ENCODE measurements at regions of chr6 and their contacts with region 1.

Region 1: DNA sequence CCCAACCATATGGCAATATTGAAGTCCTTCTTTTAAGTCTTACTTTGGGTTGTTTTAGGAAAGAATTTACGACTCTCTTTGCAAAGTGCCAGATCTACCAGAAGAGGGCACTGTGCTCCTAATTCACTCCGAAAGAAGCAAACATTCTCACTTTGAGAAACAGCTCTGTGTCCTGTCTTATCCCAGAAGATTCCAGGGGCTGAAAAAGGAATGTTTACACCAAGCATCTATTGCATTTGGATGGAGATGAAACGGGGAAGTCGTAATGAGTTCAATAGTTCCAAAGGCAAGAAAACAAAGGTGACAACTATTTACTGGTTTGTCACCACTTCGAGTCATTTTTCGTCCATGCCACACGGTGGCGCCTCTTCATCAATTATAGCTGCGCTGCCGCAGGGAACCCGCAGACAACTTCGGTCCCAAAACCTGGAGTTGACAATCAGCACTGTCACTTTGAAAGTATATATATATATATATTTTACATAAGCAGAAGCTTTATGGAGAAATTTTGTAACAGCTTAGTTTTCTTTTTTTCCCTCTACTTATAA is 121.6 kb downstream of the MOXD1 start:
- DNase-seq: peak; percentile 54
- H3K4me3 ChIP-seq: peak overlapping the region; percentile 55
- H3K27ac ChIP-seq: no peak overlapping the region
- H3K27me3 ChIP-seq: no peaks in the 10 kb centered on the region
- CTCF ChIP-seq: peak; percentile 76

Region 2: GRCh38 chr6:131923356-131923755 is 356.3 kb before region 1 on chr6:
- CTCF ChIA-PET with region 1: interaction called, 147 read pairs
- POLR2A ChIA-PET with region 1: no interaction called
- DNase-seq: no peak
- H3K4me3 ChIP-seq: no peak overlapping the region
- H3K27ac ChIP-seq: no peak overlapping the region
- H3K27me3 ChIP-seq: no peaks in the 10 kb centered on the region
- CTCF ChIP-seq: peak; percentile 53

Region 3: DNA sequence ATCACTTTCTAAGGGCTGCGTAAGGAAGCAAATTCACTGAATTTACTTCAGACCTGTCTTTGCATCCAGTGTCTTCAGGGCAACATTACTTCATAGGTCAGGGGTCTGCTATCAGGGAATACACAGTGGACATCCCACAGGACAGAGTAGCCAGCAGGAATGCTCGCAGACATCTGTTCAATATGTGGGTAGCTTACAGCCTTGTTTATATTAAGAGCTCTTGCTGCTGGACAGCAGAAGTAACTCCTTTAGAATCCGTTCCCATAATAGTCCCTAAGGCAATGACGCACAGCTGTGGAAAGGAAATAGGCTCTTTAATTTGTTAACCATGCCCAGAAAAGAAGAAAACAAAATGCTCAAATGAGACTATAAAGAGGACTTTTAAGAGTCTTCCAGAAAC is 77.1 kb before region 1 on chr6:
- CTCF ChIA-PET with region 1: interaction called, 12 read pairs
- POLR2A ChIA-PET with region 1: no interaction called
- DNase-seq: peak; percentile 81
- H3K4me3 ChIP-seq: no peak overlapping the region
- H3K27ac ChIP-seq: no peak overlapping the region
- H3K27me3 ChIP-seq: no peaks in the 10 kb centered on the region
- CTCF ChIP-seq: no peak

Region 4: GRCh38 chr6:132259070-132259469 is 20.6 kb before region 1 on chr6:
- CTCF ChIA-PET with region 1: interaction called, 79 read pairs
- POLR2A ChIA-PET with region 1: no interaction called
- DNase-seq: no peak
- H3K4me3 ChIP-seq: no peak overlapping the region
- H3K27ac ChIP-seq: no peak overlapping the region
- H3K27me3 ChIP-seq: no peaks in the 10 kb centered on the region
- CTCF ChIP-seq: peak; percentile 52

Region 5: DNA sequence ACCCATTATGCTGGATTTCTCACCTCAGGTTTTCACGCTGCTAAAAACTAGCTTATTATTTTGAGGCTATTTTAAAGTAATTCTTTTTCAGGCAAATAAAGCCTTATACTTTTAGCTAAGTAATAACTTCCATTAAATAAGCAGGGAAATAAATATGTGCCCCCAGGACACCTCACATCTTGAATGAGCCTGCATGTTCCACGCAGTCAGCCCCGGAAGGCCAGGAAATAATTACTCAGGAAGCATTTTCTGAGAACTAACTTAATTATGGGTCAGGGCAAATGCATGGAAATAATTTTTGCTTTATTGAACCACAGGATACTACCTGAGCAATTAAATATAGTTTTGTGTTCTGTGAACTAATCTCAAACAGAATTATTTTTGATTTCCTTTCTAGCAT is 192.1 kb after region 1 on chr6:
- CTCF ChIA-PET with region 1: interaction called, 28 read pairs
- POLR2A ChIA-PET with region 1: no interaction called
- DNase-seq: no peak
- H3K4me3 ChIP-seq: no peak overlapping the region
- H3K27ac ChIP-seq: no peak overlapping the region
- H3K27me3 ChIP-seq: no peaks in the 10 kb centered on the region
- CTCF ChIP-seq: no peak

Region 6: GRCh38 chr6:132530293-132530974 is 250.8 kb after region 1 on chr6:
- CTCF ChIA-PET with region 1: interaction called, 19 read pairs
- POLR2A ChIA-PET with region 1: no interaction called
- DNase-seq: peak; percentile 29
- H3K4me3 ChIP-seq: no peak overlapping the region
- H3K27ac ChIP-seq: no peak overlapping the region
- H3K27me3 ChIP-seq: peaks cover 7% of the 10 kb centered on the region
- CTCF ChIP-seq: peak; percentile 76

Region 7: DNA sequence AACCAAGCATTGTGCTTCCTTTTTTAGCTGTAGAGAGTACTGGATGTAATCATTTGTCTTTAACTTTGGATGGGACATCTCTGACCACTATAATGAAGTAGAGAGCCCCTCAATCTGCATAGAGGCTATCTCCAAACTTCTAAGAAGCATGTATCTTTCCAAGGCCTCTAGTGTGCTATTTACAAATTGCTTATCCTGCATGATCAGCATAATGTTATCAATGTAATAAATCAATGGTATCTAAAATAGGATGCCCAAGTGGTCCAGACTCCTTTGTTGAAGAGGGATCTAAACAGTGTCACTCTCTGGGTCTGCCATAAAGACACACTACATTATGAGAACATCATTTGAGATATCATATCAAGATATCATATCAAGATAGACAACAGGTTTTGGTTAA is 265.2 kb after region 1 on chr6:
- CTCF ChIA-PET with region 1: no interaction called
- POLR2A ChIA-PET with region 1: no interaction called
- DNase-seq: no peak
- H3K4me3 ChIP-seq: no peak overlapping the region
- H3K27ac ChIP-seq: no peak overlapping the region
- H3K27me3 ChIP-seq: peaks cover 29% of the 10 kb centered on the region
- CTCF ChIP-seq: no peak

Measured in AG04450 (cell line).